GM10248 (cell line): ENCODE measurements at regions of chr13 and their contacts with region 1.

Region 1: GRCh38 chr13:51797664-51798488 is 6.1 kb downstream of the DHRS12 start:
- DNase-seq: peak; percentile 61
- CTCF ChIP-seq: peak; percentile 67

Region 2: GRCh38 chr13:51297556-51297955 is 500.3 kb before region 1 on chr13:
- CTCF ChIA-PET with region 1: interaction called, 14 read pairs
- POLR2A ChIA-PET with region 1: no interaction called
- DNase-seq: no peak
- CTCF ChIP-seq: peak; percentile 35

Region 3: DNA sequence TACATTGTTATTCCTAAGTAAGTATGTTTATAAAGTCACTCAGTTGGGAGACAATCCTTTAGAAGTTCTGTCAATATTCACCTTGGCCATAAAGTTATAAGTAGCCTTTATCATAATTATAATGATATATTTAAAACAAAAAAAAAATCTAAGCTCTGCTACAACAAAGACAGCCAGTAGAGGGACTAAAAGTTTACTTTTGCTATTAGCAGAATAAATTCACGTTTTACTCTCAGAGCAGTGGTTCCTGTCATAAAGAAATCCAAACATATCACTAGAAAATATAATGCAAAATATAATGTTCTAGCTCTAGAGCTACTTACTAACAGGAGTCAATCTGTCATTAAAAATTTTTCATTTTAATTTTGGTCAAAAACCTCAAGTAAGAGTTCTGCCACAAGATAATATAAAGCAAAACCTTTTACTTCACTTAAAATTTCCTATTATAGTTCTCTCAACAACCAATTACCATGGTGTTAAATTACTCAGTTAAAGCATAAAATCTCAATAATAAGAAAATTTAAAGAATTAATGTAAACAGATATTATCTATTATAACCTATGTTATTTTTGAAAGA is 362.8 kb before region 1 on chr13:
- CTCF ChIA-PET with region 1: interaction called, 59 read pairs
- POLR2A ChIA-PET with region 1: no interaction called
- DNase-seq: no peak
- CTCF ChIP-seq: peak; percentile 21

Region 4: GRCh38 chr13:51452361-51453206 is 345.3 kb before region 1 on chr13 and contains the start of gene INTS6:
- CTCF ChIA-PET with region 1: interaction called, 7 read pairs
- POLR2A ChIA-PET with region 1: interaction called, 11 read pairs
- DNase-seq: peak; percentile 58
- CTCF ChIP-seq: no peak